ENCODE measurements at regions of chr17 and their contacts with region 1.

Region 1: GRCh38 chr17:77388384-77389311 is 247.9 kb downstream of the SEC14L1 start:
- DNase-seq: no peak
- CTCF ChIP-seq: no peak

Region 2: GRCh38 chr17:77354420-77355241 is 34.0 kb before region 1 on chr17:
- CTCF ChIA-PET with region 1: interaction called, 14 read pairs
- POLR2A ChIA-PET with region 1: no interaction called
- DNase-seq: peak; percentile 8
- CTCF ChIP-seq: no peak

Region 3: DNA sequence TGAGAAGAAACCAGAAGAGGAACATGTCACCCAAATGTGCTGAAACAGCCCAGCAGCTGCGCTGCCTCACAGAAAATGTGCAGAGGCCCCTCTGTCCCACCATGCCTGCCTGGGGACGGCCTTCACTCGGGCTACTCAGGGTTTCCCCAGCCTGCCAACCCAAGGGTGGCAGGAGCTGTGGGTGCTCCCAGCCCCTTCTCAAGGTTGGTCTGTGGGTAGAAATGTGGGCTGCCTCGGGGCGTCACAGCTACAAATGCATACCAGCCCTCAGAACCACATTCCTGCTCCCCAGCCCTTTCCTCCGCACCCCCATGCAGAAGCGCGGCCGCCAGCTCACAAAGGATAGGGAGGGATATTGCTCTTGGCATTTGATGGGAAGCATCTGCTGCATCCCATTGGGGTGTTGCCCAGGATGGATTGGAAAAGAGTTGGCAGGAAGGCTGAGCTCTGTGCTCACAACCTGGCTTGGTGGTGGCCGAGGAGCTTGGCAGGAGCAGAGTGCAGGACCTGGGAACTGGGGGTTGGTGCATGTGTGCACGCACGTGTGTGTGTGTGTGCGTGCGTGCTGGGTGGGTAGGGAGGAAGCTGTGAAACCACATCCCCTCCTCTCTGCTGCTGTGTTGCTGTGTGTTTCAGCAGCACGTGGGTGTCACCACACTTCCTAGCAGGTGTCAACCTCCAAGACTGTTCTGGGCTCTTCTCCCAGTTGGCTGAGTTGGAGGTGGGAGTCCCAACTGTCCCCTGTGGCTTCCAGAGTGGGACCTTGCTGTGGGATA is 56.5 kb after region 1 on chr17:
- CTCF ChIA-PET with region 1: interaction called, 3 read pairs
- POLR2A ChIA-PET with region 1: interaction called, 15 read pairs
- DNase-seq: peak; percentile 75
- CTCF ChIP-seq: no peak